Endothelial cell of umbilical vein (primary cell): ENCODE measurements at regions of chr7 and their contacts with region 1.

Region 1: GRCh38 chr7:954330-955238 is at the start of gene ADAP1:
- DNase-seq: no peak
- H3K4me3 ChIP-seq: peak within 1 kb of the TSS in 1 of 3 experiments; percentile 30
- H3K27ac ChIP-seq: no peak within 1 kb of the TSS
- H3K4me1 ChIP-seq: no peaks in the 10 kb centered on the region
- H3K27me3 ChIP-seq: peaks cover 2 to 4% of the 10 kb centered on the region in 2 experiments
- CTCF ChIP-seq: peak in 1 of 2 donors; percentile 24
- POLR2A ChIP-seq: no peak
- total RNA-seq, gene ADAP1: 0.46 and 0.49 TPM in 2 replicates

Region 2: GRCh38 chr7:909358-910329 is 44.9 kb before region 1 on chr7:
- CTCF ChIA-PET with region 1: interaction called, 5 read pairs
- POLR2A ChIA-PET with region 1: interaction called, 7 read pairs
- dilution Hi-C with region 1: no loop called
- intact Hi-C with region 1: loop called (anchors 2 kb)
- DNase-seq: no peak
- H3K4me3 ChIP-seq: no peak overlapping the region
- H3K27ac ChIP-seq: no peak overlapping the region
- H3K4me1 ChIP-seq: no peaks in the 10 kb centered on the region
- H3K27me3 ChIP-seq: peaks cover 6 to 9% of the 10 kb centered on the region in 2 experiments
- CTCF ChIP-seq: no peak
- POLR2A ChIP-seq: no peak

Region 3: DNA sequence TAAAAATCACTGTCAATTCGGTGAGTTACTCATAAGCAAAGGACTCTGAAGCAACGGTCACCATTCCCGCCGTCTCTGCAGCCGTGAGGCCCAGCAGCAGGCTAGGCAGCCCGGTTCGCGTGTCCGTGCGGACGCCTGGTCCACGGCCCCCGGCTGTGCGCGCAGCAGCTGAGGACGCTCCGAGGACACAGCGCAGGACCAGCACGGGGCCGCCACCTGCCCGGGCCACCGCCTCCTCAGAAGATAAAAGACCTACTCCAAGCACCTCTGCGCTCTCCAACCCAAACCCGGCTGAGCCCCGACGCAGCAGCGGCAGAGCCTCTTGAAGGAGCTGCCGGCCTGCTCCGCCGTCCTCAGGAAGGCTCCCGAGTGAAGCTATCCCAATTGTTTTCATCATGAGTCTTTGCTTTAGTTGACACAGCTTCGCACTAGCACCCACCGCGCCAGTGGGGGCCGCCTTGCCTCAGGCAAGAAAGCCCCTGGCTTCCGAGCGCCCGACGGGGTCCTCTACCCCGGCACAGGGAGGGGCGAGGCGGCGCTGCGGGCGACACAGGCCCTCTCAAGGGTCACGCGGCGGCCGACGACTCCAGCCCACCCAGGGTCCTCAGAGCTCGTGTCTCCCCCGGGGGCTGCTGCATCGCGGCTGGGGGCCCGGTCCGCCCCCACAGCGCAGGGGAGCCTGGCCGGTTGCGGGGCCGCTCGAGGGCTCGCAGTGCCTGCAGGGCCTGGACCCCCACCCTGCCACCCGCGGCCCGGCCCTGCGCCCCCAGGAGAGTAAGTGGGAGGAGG is 72.9 kb after region 1 on chr7:
- CTCF ChIA-PET with region 1: no interaction called
- POLR2A ChIA-PET with region 1: no interaction called
- dilution Hi-C with region 1: no loop called
- intact Hi-C with region 1: no loop called
- DNase-seq: peak; percentile 44
- H3K4me3 ChIP-seq: peak overlapping the region; percentile 5 to 80 (median 51)
- H3K27ac ChIP-seq: peak overlapping the region; percentile 31
- H3K4me1 ChIP-seq: peaks cover 8% of the 10 kb centered on the region
- H3K27me3 ChIP-seq: no peaks in the 10 kb centered on the region
- CTCF ChIP-seq: no peak
- POLR2A ChIP-seq: no peak